ENCODE measurements at regions of chr9 and their contacts with region 1.

Region 1: DNA sequence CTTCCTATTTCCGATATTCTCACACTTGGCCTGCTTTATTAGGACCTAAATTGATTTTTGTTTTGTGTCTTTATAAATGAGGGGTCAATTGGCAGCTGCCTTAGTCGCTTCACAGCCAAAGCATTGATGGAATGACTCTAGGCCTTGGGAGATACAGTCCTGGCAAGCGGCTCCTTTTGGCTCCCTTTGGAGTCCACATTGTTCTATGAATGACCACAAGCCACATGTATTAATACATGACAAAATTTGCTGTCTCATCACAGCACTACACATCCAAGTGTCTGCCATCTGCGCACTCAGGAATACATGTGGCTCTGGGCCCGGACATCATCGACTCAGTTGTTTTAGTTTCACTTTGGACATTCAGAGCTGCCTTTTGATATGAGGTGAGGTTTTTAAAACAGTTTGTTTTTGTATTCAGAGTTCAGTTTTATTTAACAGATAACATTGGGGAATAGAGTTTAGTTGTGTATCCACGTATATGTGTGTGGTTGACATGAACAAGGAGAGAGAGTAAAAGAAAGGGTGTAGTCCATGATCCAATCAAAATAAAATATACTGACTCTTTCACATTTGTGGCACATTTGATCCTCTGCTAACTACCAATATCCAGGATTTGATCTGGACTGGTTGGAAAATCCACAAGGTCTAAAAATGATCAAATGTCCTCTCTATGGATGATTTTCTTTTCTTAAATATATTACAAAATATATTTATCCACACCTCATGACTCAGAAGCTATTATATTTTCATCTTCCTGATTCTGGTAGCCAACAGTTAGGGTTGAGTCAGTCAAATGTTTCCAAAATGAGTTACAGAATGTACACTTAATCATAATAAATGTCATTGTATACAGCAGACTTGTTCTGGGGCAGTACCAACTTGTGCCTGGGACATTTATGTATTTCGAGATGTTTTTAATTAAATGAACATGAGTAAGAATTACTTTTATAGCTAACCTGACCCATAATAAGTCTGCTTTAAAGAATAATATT is 114.0 kb upstream of the MTAP start:
- DNase-seq: no peak
- H3K4me3 Mint-ChIP-seq: no peak overlapping the region
- H3K27ac Mint-ChIP-seq: peak overlapping the region; percentile 17
- H3K4me1 Mint-ChIP-seq: peaks cover 64% of the 10 kb centered on the region
- H3K27me3 Mint-ChIP-seq: no peaks in the 10 kb centered on the region

Region 2: GRCh38 chr9:20664501-20664900 is 1023.9 kb before region 1 on chr9:
- CTCF ChIA-PET with region 1: no interaction called
- intact Hi-C with region 1: no loop called
- DNase-seq: no peak
- H3K4me3 Mint-ChIP-seq: no peak overlapping the region
- H3K27ac Mint-ChIP-seq: no peak overlapping the region
- H3K4me1 Mint-ChIP-seq: no peaks in the 10 kb centered on the region
- H3K27me3 Mint-ChIP-seq: no peaks in the 10 kb centered on the region

Region 3: DNA sequence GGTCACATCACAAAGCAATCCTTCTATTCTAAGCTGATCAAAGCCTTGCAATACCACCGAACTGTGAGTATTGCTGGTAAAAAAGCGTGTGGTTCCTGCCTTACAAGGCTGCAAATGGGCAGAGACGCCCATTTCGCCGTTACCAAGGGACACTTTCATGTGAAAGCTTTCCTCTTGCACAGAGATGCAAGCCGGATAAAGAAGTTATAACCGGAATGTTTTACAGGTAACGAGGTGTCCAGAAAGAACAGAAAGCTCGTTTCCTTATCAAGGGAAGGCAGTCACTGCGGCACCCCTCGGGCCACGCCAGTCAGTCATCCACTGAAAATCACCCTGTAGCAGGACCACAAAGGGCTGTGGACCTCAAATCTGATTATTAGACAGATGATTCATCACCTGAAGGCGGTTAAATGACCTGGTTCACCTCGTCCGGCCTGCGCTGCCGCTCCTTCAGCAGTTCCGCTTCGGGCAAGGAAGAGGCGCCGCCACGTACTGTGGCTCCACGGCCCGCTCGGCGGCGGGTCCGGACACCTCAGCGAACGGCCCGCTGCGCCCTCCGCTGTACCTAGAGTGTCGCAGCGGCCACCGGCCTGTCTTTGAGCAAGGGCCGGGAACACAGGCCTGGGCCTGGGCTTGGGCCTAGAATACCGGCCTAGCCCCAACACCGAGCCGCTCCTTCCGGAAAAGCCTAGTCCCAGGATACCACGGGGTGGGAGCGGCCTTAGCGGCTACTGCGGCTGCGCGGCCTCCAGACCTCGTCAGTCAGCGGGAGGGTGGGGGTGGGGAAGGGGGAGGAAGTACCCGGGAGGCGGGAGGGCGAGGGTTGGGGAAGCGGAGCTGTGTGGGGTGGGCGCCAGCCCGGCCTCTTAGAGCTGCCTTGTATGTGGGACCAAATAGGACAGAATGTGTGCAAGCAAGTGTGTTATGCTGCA is 353.4 kb before region 1 on chr9 and contains the start of gene KLHL9:
- CTCF ChIA-PET with region 1: no interaction called
- intact Hi-C with region 1: loop called (anchors 5 kb)
- DNase-seq: peak; percentile 93
- H3K4me3 Mint-ChIP-seq: peak within 1 kb of the TSS; percentile 84
- H3K27ac Mint-ChIP-seq: peak within 1 kb of the TSS; percentile 91
- H3K4me1 Mint-ChIP-seq: peaks cover 48% of the 10 kb centered on the region
- H3K27me3 Mint-ChIP-seq: no peaks in the 10 kb centered on the region
- total RNA-seq, gene KLHL9: 17.5 to 18.3 TPM

Region 4: DNA sequence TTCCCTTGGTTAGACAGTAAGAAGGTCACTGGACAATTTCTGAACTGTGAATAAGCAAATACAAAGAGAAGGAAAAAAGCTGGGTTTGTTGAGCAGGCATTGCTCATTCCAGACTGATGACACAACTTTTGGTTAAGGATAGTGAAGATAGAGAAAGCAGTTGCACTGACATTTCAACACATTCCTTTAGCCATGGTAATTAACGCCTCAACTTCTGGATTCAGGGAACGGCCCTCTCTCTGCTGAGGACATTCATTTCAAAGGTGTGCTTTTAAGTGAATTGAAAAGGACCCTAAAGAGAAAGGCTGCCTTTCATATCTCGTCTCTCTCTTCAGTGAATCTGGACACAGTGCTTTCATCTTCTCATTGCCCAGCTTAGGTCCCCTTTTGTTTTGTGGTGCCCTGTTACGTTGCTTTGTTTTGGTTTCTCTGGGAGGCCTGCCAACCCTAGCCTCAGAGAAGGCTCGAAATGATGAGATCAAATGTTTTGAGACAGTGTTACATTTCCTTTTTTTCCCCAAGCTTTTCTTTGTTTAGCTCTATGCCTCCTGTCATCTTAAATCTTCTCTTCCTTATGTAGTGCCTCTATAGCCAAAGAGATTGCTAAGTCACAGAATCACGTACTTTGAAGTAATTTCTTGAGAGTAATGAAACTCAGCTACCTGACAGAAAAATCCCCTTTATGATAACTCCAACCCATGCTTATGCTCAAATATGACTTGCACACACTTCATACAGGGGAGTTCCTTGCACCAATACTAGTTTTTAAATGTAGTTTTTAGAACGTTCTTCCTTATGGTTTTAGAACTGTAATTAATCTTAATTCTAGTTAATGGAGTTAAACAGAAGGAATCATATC is 111.8 kb before region 1 on chr9:
- CTCF ChIA-PET with region 1: interaction called, 3 read pairs
- intact Hi-C with region 1: loop called (anchors 1 kb)
- DNase-seq: peak; percentile 80
- H3K4me3 Mint-ChIP-seq: peak overlapping the region; percentile 3
- H3K27ac Mint-ChIP-seq: peak overlapping the region; percentile 68
- H3K4me1 Mint-ChIP-seq: peaks cover 37% of the 10 kb centered on the region
- H3K27me3 Mint-ChIP-seq: peaks cover 2% of the 10 kb centered on the region

Region 5: DNA sequence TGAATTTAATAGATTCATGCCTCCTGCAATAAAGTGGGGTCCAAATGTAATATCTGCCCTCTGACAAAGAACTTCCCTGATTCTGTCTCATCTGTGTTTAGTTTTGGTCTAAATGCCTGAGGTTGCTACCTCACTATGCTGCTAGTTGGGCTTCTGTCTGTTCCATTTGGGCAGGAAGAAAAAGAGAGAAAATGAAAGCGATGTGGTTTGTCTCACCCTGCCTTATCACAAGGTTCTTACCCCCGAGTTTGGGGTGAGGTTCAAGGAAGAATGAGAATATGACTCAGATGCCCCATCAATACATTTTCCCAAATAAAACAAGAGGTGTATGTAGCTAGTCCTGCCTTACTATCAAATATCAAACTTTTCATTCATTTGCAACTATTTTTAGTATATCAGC is 18.0 kb before region 1 on chr9:
- CTCF ChIA-PET with region 1: interaction called, 3 read pairs
- intact Hi-C with region 1: loop called (anchors 1 kb)
- DNase-seq: peak; percentile 7
- H3K4me3 Mint-ChIP-seq: no peak overlapping the region
- H3K27ac Mint-ChIP-seq: no peak overlapping the region
- H3K4me1 Mint-ChIP-seq: peaks cover 31% of the 10 kb centered on the region
- H3K27me3 Mint-ChIP-seq: no peaks in the 10 kb centered on the region

Region 6: DNA sequence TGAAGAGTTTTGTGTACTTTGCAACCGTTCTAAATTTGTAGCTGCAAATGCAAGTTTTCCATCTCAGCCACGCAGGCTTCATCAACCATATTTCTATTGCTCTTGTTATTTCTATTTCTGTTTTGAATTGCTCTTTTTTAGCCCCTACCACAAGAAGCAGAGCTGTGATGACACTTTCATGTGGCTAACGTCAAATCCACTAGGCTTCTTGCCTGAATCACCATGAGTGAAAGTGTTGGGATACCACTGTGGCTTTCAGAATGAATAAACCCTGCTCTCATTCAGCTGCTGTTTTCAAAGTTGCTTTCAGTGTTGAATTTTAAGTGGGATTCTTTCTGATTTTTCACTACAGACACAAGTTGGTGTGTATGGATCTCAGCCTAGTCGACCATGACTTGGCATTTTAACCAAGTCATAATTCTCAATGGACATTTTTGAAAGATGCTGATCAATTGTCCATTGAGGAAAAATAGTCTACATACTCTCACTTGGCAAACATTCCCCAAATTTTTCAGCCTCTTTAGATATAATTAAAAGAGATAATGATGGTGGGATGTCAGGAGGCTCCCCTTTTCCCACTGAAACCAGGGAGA is 73.0 kb after region 1 on chr9:
- CTCF ChIA-PET with region 1: no interaction called
- intact Hi-C with region 1: loop called (anchors 1 kb)
- DNase-seq: peak; percentile 60
- H3K4me3 Mint-ChIP-seq: no peak overlapping the region
- H3K27ac Mint-ChIP-seq: no peak overlapping the region
- H3K4me1 Mint-ChIP-seq: peaks cover 13% of the 10 kb centered on the region
- H3K27me3 Mint-ChIP-seq: peaks cover 29% of the 10 kb centered on the region

Region 7: DNA sequence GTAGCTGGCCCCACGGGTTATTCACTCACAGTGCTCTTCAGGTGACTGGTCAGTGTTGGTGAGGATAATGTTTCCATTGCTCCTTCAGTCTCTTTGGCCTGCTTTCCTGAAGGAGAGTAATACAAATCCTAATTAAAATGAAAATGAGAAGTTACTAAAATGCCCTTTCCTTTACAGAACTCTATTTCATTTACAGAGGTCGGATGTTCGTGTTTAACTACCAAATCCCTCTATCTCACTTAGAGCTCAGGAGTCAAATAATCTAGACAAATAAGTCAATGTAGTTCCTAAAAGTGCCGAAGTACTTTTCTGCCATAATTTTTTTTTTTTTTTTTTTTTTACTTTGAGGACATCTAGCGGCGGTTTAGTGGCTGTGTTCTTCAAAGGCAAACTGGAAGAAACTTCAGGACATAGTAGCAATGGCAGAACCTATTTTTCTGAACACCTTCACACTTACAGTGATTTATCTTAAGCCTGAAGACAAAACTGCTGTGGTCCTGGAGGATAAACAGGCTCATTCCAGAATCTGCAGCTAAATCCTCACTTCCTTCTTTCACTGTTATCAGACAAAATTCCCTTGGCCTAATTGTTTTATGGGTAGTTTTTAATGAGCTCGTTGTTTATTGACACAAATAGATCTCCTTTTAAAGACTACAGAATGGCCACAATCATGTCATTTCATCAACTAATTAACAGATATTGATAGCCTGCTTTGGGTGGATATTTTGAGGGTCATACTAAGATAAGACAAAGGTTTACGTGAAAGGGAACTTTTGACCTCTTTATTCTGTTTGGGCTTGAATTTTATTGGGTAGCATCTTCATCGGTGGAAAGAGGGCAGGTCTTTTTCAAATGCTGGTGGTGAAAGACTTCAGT is 550.6 kb after region 1 on chr9:
- CTCF ChIA-PET with region 1: no interaction called
- intact Hi-C with region 1: loop called (anchors 2 kb)
- DNase-seq: no peak
- H3K4me3 Mint-ChIP-seq: no peak overlapping the region
- H3K27ac Mint-ChIP-seq: no peak overlapping the region
- H3K4me1 Mint-ChIP-seq: peaks cover 49% of the 10 kb centered on the region
- H3K27me3 Mint-ChIP-seq: peaks cover 15% of the 10 kb centered on the region